ENCODE measurements at regions of chr4 and their contacts with region 1.

Region 1: DNA sequence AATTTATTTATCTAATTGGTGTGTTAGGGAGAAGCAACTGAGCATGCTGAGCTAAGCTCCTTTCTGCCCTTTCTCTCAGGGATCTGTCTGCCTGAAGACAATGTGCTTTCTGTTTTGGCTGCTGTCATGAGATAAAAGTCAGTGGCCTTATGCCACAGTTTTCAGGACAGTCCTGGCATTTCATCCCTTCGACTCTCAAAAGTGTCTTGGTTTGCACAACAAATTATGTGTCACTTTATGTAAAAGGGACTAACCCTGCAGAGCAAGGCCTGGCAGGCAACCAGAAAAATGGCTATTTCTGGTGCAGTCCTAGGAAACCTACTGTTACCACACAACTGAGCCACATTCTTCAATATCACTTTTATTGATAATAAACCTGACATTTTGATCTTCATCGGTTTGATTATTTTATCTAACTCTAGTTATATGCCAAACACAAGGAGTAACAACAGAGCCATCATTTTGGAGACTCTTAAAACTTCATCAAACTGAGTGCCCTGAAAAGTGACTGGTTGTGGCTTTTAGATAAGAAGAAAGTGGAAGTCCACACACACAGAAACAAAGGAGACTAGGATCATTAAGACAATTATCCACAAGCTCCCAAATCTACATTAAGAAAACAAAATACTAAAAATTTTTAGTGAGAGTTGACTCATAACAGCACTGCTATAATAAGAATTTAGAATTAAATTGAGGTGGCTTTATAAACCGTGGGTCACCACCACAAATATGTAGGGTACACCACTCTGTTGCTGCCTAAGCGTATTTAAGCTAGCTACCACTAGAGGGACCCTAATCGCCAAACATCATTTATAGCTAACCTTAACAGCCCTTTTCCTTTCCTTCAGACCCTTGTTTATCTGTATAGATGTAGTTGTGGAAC is 95.9 kb upstream of the PTPN13 start:
- DNase-seq: no peak
- H3K4me3 ChIP-seq: no peak overlapping the region
- H3K27ac ChIP-seq: no peak overlapping the region
- H3K4me1 ChIP-seq: no peaks in the 10 kb centered on the region
- H3K27me3 ChIP-seq: no peaks in the 10 kb centered on the region
- CTCF ChIP-seq: peak; percentile 71

Region 2: GRCh38 chr4:86594559-86595425 is 96.6 kb after region 1 on chr4:
- intact Hi-C with region 1: loop called (anchors 5 kb)
- DNase-seq: peak; percentile 30
- H3K4me3 ChIP-seq: peak overlapping the region; percentile 60
- H3K27ac ChIP-seq: peak overlapping the region; percentile 71
- H3K4me1 ChIP-seq: no peaks in the 10 kb centered on the region
- H3K27me3 ChIP-seq: no peaks in the 10 kb centered on the region
- CTCF ChIP-seq: no peak

Region 3: DNA sequence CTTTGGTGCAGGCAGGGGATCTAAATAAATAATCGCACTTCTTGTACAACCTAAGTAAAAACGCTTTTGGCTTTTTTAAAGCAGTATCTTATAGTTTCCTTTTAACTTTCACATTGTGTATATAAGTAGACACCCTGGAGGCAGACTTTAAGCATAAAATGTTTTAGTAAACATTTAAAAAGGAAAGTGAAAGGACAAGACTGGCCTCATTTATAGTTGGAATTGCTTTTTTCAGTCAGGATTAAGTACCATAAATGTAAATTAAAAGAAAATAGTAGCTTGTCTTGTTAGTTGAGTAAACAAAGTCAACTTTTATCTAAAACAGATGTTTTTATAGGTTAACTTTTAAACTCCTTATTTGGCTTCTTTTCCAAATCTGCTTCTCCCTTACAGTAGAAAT is 135.6 kb after region 1 on chr4:
- intact Hi-C with region 1: no loop called
- DNase-seq: no peak
- H3K4me3 ChIP-seq: no peak overlapping the region
- H3K27ac ChIP-seq: no peak overlapping the region
- H3K4me1 ChIP-seq: no peaks in the 10 kb centered on the region
- H3K27me3 ChIP-seq: no peaks in the 10 kb centered on the region
- CTCF ChIP-seq: no peak

Region 4: DNA sequence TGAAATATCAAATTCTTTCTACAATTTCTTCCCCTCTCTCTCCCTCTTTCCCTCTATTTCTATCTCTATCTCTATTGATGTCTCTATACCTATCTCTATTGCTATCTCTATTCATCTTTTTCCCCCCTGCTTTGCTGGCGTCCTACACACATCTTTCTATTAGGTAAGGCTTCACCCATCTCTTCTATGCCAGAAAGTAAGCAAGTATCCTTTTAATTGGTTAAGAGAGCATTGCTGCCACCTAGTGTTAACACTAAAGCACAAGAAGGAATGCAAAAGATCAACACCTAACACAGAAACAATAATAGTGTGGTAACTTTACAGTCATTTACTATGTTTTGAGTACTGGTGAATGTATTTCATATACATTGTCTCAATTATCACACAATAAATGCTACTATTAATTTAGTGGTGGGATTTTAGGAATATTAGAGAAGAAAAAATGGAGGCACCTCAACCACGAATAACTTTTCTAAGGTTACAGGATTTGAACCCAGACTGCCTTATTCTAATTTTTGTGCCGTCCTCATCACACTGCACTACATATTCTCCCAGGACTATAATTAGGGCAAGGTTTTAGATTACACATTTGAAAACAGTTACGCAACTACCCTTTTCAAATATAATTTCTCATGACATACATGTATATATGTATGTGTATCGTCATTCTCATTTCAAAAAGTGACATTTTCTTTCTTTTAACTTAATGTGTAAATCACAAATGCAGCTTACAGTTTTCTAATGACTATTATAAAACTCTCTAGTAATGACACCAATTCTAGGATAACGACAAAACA is 397.7 kb after region 1 on chr4:
- intact Hi-C with region 1: loop called (anchors 2 kb)
- DNase-seq: no peak
- H3K4me3 ChIP-seq: no peak overlapping the region
- H3K27ac ChIP-seq: no peak overlapping the region
- H3K4me1 ChIP-seq: no peaks in the 10 kb centered on the region
- H3K27me3 ChIP-seq: no peaks in the 10 kb centered on the region
- CTCF ChIP-seq: peak; percentile 73